Motor neuron (in vitro differentiated cells): ENCODE measurements at regions of chr14 and their contacts with region 1.

Region 1: DNA sequence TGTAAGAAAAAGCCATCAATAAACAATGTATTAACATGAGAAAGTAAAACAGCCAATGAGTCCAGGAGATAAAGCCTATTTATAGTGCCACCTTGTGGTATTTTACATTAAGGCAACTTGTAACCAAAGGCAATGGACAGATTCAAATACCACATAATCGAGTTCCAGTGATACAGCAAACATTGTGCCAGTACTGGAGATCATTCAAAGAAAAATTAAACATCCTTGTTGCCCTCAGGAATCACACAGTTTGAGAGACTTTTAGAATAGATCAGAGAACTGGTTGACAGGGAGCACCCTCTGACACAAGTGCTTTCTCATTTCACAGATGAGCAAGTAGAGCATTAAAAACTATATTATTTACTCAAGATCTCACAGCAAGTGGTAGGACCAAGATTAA is 98.1 kb downstream of the DDHD1 start:
- ATAC-seq: peak; percentile 44 to 88 (median 65)
- H3K4me3 ChIP-seq: no peak overlapping the region
- H3K27ac ChIP-seq: no peak overlapping the region
- H3K4me1 ChIP-seq: no peaks in the 10 kb centered on the region

Region 2: GRCh38 chr14:52824507-52824906 is 230.5 kb before region 1 on chr14:
- in situ Hi-C with region 1: loop called in 2 of 9 experiments (anchors 10 to 25 kb)
- ATAC-seq: peak in 3 of 8 experiments; percentile 84 to 88 (median 86)
- H3K4me3 ChIP-seq: no peak overlapping the region
- H3K27ac ChIP-seq: no peak overlapping the region
- H3K4me1 ChIP-seq: no peaks in the 10 kb centered on the region